ENCODE measurements at regions of chr12 and their contacts with region 1.

Region 1: DNA sequence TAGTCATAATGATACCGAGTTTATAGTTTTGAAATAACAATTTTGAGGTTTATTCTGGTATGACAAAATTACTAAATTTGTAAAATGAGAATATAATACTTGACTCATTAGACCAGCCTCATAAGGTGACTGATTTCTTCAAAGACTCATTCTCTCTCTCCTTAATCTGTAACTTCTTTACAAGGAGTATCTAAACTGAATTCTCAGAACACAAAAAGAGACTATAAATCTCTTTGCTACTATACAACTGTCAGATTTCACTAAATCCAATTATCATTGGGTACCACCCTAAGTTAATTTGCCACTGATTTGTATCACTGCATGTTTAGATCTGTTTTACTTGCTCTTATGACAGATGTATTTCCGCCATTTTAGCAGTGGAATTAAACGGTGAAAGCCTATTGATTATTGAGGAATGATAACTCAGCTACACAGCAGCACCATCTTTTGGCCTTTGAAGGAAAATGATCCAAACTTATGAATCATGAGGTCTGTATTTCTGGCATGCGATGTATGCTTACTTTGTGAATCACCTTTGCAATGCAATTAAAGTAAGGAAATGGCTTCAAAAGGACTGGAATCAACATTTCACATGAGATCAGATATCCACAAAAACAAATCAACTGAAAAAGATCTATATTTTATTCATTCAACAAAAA is 161.2 kb downstream of the RERGL start:
- DNase-seq: peak; percentile 88
- ATAC-seq: peak; percentile 86
- H3K4me3 ChIP-seq: peak overlapping the region; percentile 48; the same call in 1 of the 2 replicates
- H3K27ac ChIP-seq: peak overlapping the region; percentile 63
- H3K4me1 ChIP-seq: peaks cover 30% of the 10 kb centered on the region
- H3K27me3 ChIP-seq: no peaks in the 10 kb centered on the region
- CTCF ChIP-seq: peak; percentile 74

Region 2: DNA sequence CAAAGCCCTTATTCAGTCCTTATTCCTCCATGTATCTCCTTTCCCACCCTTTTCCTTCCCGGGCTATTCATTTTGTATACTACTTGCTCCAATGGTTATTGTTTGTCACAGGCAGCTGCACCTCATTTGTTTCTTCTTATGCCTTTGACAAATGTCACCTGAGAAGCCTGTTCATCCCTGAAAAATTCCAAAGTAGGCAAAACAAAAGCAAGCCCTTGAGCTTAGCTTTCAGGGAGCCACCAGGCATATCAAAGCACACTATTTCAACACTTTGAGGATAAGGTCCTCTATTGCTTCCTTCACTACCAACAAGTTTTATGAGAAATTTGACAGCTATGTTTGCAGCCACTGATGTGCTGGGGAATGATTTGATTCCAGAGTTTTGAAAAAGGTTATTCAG is 584.2 kb before region 1 on chr12:
- CTCF ChIA-PET with region 1: no interaction called
- POLR2A ChIA-PET with region 1: no interaction called
- intact Hi-C with region 1: loop called (anchors 10 kb)
- DNase-seq: no peak
- ATAC-seq: no peak
- H3K4me3 ChIP-seq: no peak overlapping the region
- H3K27ac ChIP-seq: no peak overlapping the region
- H3K4me1 ChIP-seq: peaks cover 32% of the 10 kb centered on the region
- H3K27me3 ChIP-seq: no peaks in the 10 kb centered on the region
- CTCF ChIP-seq: no peak

Region 3: DNA sequence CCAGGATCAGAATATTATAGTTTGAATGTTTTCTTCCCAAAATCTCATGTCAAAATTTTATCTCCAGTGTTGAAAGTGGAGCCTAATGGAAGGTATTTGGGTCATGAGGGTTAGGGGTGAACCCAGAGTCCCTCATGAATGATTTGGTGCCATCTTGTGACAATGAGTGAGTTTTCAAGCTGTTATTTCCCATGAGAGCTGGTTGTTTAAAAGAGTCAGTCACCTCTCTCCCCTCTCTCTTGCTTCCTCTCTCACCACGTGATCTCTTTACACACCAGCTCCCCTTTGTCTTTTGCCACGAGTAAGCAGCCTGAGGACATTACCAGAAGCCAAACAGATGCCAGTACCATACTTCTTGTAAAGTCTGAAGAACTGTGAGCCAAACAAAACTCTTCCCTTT is 400.4 kb before region 1 on chr12:
- CTCF ChIA-PET with region 1: no interaction called
- POLR2A ChIA-PET with region 1: no interaction called
- intact Hi-C with region 1: loop called (anchors 5 kb)
- DNase-seq: peak; percentile 4
- ATAC-seq: no peak
- H3K4me3 ChIP-seq: no peak overlapping the region
- H3K27ac ChIP-seq: no peak overlapping the region
- H3K4me1 ChIP-seq: no peaks in the 10 kb centered on the region
- H3K27me3 ChIP-seq: no peaks in the 10 kb centered on the region
- CTCF ChIP-seq: no peak; the same call in 1 of the 2 replicates

Region 4: GRCh38 chr12:17642340-17642650 is 286.5 kb before region 1 on chr12:
- CTCF ChIA-PET with region 1: no interaction called
- POLR2A ChIA-PET with region 1: no interaction called
- intact Hi-C with region 1: loop called (anchors 1 kb)
- DNase-seq: no peak
- ATAC-seq: no peak
- H3K4me3 ChIP-seq: 0 out of 2 replicates have a peak overlapping the region, but pooled peaks have one; percentile 52
- H3K27ac ChIP-seq: no peak overlapping the region
- H3K4me1 ChIP-seq: no peaks in the 10 kb centered on the region
- H3K27me3 ChIP-seq: no peaks in the 10 kb centered on the region
- CTCF ChIP-seq: no peak; the same call in 1 of the 2 replicates

Region 5: GRCh38 chr12:17971850-17972249 is 43.0 kb after region 1 on chr12:
- CTCF ChIA-PET with region 1: no interaction called
- POLR2A ChIA-PET with region 1: no interaction called
- intact Hi-C with region 1: no loop called
- DNase-seq: peak; percentile 55
- ATAC-seq: peak; percentile 77
- H3K4me3 ChIP-seq: no peak overlapping the region
- H3K27ac ChIP-seq: 0 out of 2 replicates have a peak overlapping the region, but pooled peaks have one; percentile 32
- H3K4me1 ChIP-seq: peaks cover 9% of the 10 kb centered on the region
- H3K27me3 ChIP-seq: no peaks in the 10 kb centered on the region
- CTCF ChIP-seq: no peak

Measured in PC-3 (cell line).